CD4-positive, alpha-beta memory T cell (primary cell): ENCODE measurements at regions of chr13 and their contacts with region 1.

Region 1: DNA sequence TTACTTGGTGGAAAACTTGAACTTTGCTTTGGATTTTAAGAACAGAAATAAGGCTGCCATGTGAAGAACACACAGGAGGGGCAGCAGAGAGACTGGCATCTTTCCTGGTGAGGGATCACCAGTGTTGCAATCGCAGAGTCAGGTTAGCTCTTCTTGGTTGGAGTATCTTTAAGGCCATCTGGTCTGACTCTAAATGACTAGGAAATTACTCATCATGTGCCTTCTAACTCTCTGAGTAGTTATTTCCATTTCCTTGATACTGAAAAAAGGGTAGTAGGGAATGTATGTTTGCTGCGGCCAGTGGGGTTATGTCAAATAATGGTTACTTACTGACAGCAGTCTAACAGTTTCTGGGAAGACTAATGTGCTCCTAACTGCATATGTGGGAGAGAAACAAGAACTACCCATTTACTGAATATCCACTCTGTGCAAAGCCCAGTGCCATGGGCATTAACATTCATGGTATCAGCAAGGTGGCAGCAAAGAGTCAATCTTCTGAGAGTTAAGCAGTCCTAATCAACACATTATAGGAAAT is 122.1 kb downstream of the COG6 start:
- DNase-seq: peak; percentile 28 to 51 (median 37)
- H3K4me3 ChIP-seq: no peak overlapping the region
- H3K4me3 Mint-ChIP-seq: no peak overlapping the region
- H3K27ac ChIP-seq: no peak overlapping the region
- H3K27ac Mint-ChIP-seq: peak overlapping the region in 5 of 7 donors; percentile 22 to 78 (median 62)
- H3K4me1 ChIP-seq: peaks cover 29% of the 10 kb centered on the region
- H3K4me1 Mint-ChIP-seq: peaks cover 25 to 33% (median 29%) of the 10 kb centered on the region in 4 donors
- H3K27me3 ChIP-seq: no peaks in the 10 kb centered on the region
- H3K27me3 Mint-ChIP-seq: no peaks in the 10 kb centered on the region

Region 2: GRCh38 chr13:39892721-39893685 is 115.4 kb after region 1 on chr13:
- CTCF ChIA-PET with region 1: interaction called, 3 read pairs
- POLR2A ChIA-PET with region 1: no interaction called
- intact Hi-C with region 1: loop called (anchors 2 kb)
- DNase-seq: peak in 4 of 5 donors; percentile 12 to 41 (median 27)
- H3K4me3 ChIP-seq: no peak overlapping the region
- H3K4me3 Mint-ChIP-seq: peak overlapping the region; percentile 23 to 75 (median 52)
- H3K27ac ChIP-seq: no peak overlapping the region
- H3K27ac Mint-ChIP-seq: peak overlapping the region in 6 of 7 donors; percentile 31 to 68 (median 50)
- H3K4me1 ChIP-seq: peaks cover 24% of the 10 kb centered on the region
- H3K4me1 Mint-ChIP-seq: peaks cover 15 to 35% (median 26%) of the 10 kb centered on the region in 4 donors
- H3K27me3 ChIP-seq: no peaks in the 10 kb centered on the region
- H3K27me3 Mint-ChIP-seq: no peaks in the 10 kb centered on the region